ENCODE measurements at regions of chr11 and their contacts with region 1.

Region 1: DNA sequence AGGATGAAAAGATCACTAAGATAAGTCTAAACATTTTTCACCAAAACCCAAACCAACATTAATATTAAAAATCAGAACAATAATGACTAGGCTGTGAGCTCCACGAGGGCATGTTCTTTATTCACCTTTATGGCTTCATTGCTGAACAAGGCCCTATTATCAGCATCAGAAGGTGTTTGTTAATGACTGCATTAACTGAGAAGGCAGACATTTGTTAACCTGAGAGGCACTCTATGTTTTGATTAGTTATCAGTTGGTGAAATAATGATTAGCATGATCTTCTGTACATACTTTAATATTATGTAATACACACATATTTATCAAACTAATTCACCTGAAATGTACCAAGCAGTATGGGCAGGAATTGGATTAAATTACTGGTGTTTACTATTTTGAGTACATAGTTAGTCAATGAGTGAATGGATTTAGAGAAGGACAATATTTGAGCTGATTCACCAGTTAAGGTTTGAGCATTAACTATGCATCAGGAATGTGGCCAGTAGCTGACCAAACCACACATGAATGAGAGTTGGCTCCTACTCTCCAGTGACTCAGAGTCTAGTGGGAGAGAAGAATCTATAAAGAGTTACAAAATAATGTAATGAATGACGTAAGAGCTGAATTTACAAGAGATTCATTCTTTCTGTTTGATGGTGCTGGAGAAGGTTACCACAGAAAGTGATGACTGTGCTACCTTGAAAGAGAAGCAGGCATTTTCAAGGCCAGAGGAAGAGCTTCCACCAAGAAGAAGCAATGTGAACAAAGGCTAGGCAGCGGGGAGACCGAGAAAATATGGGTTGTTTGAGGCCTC is 6.7 kb downstream of the IL18 start:
- DNase-seq: peak; percentile 98
- ATAC-seq: peak; percentile 93
- H3K4me3 ChIP-seq: peak overlapping the region in 1 of 2 experiments; percentile 24; a peak in 2 of 4 replicates
- H3K27ac ChIP-seq: peak overlapping the region; percentile 86
- H3K4me1 ChIP-seq: peaks cover 39 to 69% of the 10 kb centered on the region in 2 experiments
- H3K27me3 ChIP-seq: no peaks in the 10 kb centered on the region
- CTCF ChIP-seq: no peak
- POLR2A ChIP-seq: no peak
- RAD21 ChIP-seq: peak; percentile 31; the same call in 1 of the 2 replicates

Region 2: GRCh38 chr11:112050721-112051120 is 106.4 kb before region 1 on chr11:
- CTCF ChIA-PET with region 1: no interaction called
- POLR2A ChIA-PET with region 1: no interaction called
- RAD21 ChIA-PET with region 1: no interaction called
- intact Hi-C with region 1: no loop called
- DNase-seq: no peak
- ATAC-seq: no peak
- H3K4me3 ChIP-seq: no peak overlapping the region
- H3K27ac ChIP-seq: no peak overlapping the region
- H3K4me1 ChIP-seq: peaks cover 6 to 15% of the 10 kb centered on the region in 2 experiments; a peak in 3 of 4 replicates
- H3K27me3 ChIP-seq: no peaks in the 10 kb centered on the region
- CTCF ChIP-seq: no peak
- POLR2A ChIP-seq: no peak
- RAD21 ChIP-seq: no peak

Region 3: DNA sequence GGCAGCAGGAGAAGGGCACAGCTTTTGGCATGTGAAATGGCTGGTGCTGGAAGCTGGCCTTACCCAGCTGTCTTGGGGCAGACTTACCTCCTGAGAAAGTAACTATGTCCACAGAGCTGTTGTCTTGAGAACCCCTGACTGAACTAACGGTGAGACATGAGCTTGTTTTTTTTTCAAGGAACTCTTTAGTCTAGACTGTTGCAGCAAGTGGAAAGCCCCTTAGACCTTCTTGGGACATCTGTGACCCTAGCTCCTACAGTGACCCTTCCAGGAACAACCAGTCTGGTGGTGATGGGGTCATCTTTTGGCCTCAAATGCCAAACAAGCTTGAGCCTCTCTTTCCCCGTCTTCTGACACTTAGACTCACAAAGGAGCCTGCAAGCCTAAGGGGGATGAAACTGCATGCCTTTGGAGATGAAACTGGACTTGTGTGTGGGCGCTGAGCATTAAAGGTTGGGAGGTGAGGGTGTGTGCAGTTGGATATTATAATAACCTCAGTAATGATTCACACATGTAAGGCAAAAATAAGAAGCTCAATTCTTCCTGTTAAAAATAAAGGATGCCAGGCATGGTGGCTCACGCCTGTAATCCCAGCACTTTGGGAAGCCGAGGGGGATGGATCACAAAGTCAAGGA is 35.1 kb before region 1 on chr11:
- CTCF ChIA-PET with region 1: interaction called, 3 read pairs
- POLR2A ChIA-PET with region 1: interaction called, 10 read pairs
- RAD21 ChIA-PET with region 1: interaction called in 1 of 2 experiments, 4 read pairs
- intact Hi-C with region 1: loop called (anchors 5 kb)
- DNase-seq: no peak
- ATAC-seq: no peak
- H3K4me3 ChIP-seq: no peak overlapping the region
- H3K27ac ChIP-seq: peak overlapping the region; percentile 93
- H3K4me1 ChIP-seq: peaks cover 50 to 80% of the 10 kb centered on the region in 2 experiments
- H3K27me3 ChIP-seq: no peaks in the 10 kb centered on the region
- CTCF ChIP-seq: no peak
- POLR2A ChIP-seq: no peak
- RAD21 ChIP-seq: no peak